Caco-2 (cell line): ENCODE measurements at regions of chr12 and their contacts with region 1.

Region 1: GRCh38 chr12:26402648-26403047 is 207.3 kb downstream of the SSPN start:
- DNase-seq: peak; percentile 46 to 47
- H3K4me3 ChIP-seq: no peak overlapping the region
- H3K4me3 Mint-ChIP-seq: no peak overlapping the region
- H3K27ac Mint-ChIP-seq: no peak overlapping the region
- H3K4me1 ChIP-seq: no peaks in the 10 kb centered on the region
- H3K4me1 Mint-ChIP-seq: no peaks in the 10 kb centered on the region
- H3K27me3 ChIP-seq: no peaks in the 10 kb centered on the region
- H3K27me3 Mint-ChIP-seq: no peaks in the 10 kb centered on the region
- CTCF ChIP-seq: peak; percentile 38 to 43

Region 2: DNA sequence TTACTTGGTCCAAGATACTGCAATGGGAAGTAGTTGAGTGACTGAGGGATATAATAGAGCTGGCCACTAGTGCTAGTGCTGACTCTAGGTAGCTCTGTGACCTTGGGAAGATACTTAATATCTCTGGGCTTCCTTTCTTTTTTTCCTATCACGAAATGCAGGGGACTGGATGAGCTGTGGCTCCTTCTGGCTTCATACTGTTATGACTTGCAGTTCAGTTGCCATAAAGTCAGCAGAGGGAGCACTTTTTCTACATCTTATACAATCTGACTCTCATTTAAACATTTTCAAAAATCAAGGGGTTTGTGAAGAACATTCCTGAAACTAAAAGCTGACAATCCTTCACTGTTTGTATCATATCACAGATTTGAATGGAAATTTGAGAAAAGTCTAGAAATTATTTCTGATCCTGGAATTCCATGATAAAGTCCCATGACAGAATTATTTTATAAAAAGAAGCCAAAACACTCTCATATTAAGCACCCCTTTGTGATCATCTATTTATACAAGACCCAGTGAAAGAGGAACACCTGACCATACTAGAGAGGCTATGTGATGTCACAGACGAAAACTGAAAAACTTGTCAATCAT is 283.2 kb before region 1 on chr12:
- CTCF ChIA-PET with region 1: no interaction called
- POLR2A ChIA-PET with region 1: no interaction called
- intact Hi-C with region 1: loop called (anchors 1 kb)
- DNase-seq: peak in 1 of 2 experiments; percentile 55
- H3K4me3 ChIP-seq: no peak overlapping the region
- H3K4me3 Mint-ChIP-seq: no peak overlapping the region
- H3K27ac Mint-ChIP-seq: no peak overlapping the region
- H3K4me1 ChIP-seq: peaks cover 25% of the 10 kb centered on the region
- H3K4me1 Mint-ChIP-seq: peaks cover 16% of the 10 kb centered on the region
- H3K27me3 ChIP-seq: peaks cover 11% of the 10 kb centered on the region
- H3K27me3 Mint-ChIP-seq: peaks cover 19% of the 10 kb centered on the region
- CTCF ChIP-seq: peak; percentile 65 to 73